CD8-positive, alpha-beta memory T cell (primary cell): ENCODE measurements at regions of chr15 and their contacts with region 1.

Region 1: DNA sequence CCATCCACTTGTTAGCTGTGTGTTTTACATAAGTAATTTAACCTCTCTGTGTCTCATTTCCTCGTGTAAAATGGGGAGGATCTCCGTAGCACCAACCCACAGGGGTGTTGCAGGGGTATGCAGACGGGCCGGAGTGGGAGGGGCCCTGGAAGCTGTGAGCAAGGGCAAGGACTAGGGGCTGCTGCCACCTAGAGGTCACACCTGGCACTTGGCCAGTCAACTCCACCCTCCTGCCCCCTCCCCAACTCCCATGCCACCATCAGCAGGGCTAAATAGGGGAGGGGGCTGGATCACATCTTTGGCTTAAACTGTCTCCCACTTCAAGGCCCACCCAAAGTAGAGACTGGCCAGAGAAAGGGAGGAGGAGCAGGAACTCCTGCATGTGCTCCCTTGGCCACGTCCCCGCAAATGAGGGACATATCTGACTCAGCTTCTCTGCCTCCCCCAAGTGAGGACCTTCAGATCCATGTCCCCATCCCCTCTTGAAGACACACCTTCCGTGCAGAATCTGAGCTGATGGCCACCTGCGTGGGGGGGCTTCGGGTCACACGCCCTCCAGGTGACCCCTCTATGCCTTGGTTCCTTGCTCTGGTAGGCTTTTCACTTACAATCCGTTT is 2.6 kb downstream of the CCDC9B start:
- DNase-seq: peak; percentile 59 to 83 (median 62)
- H3K4me3 ChIP-seq: no peak overlapping the region
- H3K4me3 Mint-ChIP-seq: no peak overlapping the region
- H3K27ac ChIP-seq: no peak overlapping the region
- H3K27ac Mint-ChIP-seq: peak overlapping the region in 2 of 8 donors; percentile 38 to 54
- H3K4me1 ChIP-seq: peaks cover 23% of the 10 kb centered on the region
- H3K4me1 Mint-ChIP-seq: peaks cover 4 to 12% (median 7%) of the 10 kb centered on the region in 3 donors
- H3K27me3 ChIP-seq: no peaks in the 10 kb centered on the region
- H3K27me3 Mint-ChIP-seq: peaks cover 2 to 4% of the 10 kb centered on the region in 2 donors

Region 2: DNA sequence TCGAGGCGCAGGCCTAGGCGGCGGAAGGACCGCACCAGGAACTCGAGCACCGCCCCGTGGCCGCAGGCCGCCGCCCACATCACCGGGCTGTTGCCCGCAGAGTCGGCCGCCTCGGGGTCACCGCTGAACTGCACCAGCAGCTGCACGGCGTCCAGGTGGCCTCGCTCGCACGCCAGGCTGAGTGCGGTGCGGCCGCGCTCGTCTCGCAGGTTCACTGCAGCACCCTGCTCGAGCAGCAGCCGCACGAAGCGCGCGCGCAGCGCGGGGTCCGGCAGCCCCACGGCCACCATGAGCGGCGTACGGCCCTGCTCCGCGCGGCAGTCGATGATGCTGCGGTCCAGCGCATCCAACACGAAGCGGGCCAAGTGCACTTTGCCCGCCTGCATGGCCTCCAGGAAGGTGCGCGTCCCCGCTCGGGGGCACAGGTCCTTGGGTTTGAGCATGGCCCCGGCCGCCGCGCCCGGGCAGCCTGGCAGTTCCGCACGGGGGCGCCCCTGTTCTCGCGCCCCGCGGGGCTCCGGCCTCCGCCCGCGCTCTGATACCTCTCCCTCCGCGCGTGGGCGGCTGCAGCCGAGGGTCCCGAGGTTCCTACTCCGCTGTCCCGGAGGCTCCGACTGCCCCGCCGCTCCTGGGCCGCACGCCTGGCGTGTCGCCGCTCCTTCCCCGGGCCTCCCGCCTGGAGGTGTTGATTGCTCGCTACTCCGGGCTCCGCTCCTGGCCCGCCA is 55.8 kb before region 1 on chr15:
- CTCF ChIA-PET with region 1: interaction called, 268 read pairs
- POLR2A ChIA-PET with region 1: no interaction called
- DNase-seq: peak; percentile 30 to 69 (median 44)
- H3K4me3 ChIP-seq: peak overlapping the region; percentile 64
- H3K4me3 Mint-ChIP-seq: peak overlapping the region; percentile 55 to 85 (median 64)
- H3K27ac ChIP-seq: no peak overlapping the region
- H3K27ac Mint-ChIP-seq: no peak overlapping the region
- H3K4me1 ChIP-seq: peaks cover 6% of the 10 kb centered on the region
- H3K4me1 Mint-ChIP-seq: peaks cover 3 to 9% (median 4%) of the 10 kb centered on the region in 3 donors
- H3K27me3 ChIP-seq: peaks cover 26% of the 10 kb centered on the region
- H3K27me3 Mint-ChIP-seq: peaks cover 7 to 33% of the 10 kb centered on the region in 2 donors

Region 3: DNA sequence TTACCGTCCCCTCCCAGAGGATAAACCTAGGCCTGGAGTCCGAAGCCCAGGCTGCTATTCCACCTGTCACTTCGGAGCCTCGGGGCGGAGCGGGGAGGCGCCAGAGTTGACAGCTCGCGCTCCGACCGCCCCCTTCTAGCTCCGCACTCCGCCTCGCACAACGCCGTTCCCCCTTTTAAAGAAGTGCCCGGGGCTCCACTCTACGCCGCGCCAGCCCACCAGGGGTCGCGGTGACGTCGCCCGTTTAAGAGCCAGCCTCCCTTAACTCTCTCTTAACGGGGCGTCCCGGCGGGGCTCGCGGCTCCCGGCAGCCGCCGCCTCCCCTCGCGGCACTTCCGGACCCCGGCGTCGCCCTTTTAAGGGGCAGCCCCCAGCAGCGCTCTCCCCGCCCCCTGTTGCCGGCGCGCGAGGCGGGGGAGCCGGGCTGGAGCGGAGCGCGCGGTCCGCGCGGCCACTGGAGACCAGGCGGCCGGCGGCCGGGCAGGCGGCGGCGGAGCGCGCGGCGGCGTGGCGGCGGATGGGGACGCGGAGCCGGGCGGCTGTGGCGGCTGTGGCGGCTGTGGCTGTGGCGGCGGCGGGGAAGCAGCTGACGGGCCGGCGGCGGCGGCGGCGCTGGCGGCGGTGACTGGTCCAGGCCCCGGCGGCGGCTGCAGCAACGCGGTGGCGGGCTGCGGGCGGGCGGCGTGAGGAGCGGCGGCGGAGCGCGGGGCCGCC is 14.8 kb before region 1 on chr15 and contains the start of gene INAFM2:
- CTCF ChIA-PET with region 1: interaction called, 90 read pairs
- POLR2A ChIA-PET with region 1: interaction called, 8 read pairs
- DNase-seq: peak; percentile 86 to 94 (median 90)
- H3K4me3 ChIP-seq: peak within 1 kb of the TSS; percentile 40
- H3K4me3 Mint-ChIP-seq: peak within 1 kb of the TSS; percentile 64 to 89 (median 83)
- H3K27ac ChIP-seq: peak within 1 kb of the TSS; percentile 39
- H3K27ac Mint-ChIP-seq: peak within 1 kb of the TSS; percentile 14 to 96 (median 68)
- H3K4me1 ChIP-seq: peaks cover 23% of the 10 kb centered on the region
- H3K4me1 Mint-ChIP-seq: peaks cover 22 to 42% (median 29%) of the 10 kb centered on the region in 3 donors
- H3K27me3 ChIP-seq: no peaks in the 10 kb centered on the region
- H3K27me3 Mint-ChIP-seq: peaks cover 0 to 3% of the 10 kb centered on the region in 2 donors
- total RNA-seq, gene INAFM2: 13.5 to 15.3 TPM

Region 4: GRCh38 chr15:40357723-40358470 is 19.7 kb after region 1 on chr15 and contains the start of gene DISP2:
- CTCF ChIA-PET with region 1: interaction called, 24 read pairs
- POLR2A ChIA-PET with region 1: no interaction called
- DNase-seq: peak; percentile 87 to 92 (median 88)
- H3K4me3 ChIP-seq: peak within 1 kb of the TSS; percentile 81
- H3K4me3 Mint-ChIP-seq: peak within 1 kb of the TSS; percentile 80 to 91 (median 83)
- H3K27ac ChIP-seq: no peak within 1 kb of the TSS
- H3K27ac Mint-ChIP-seq: peak within 1 kb of the TSS in 4 of 8 donors; percentile 24 to 56 (median 44)
- H3K4me1 ChIP-seq: peaks cover 11% of the 10 kb centered on the region
- H3K4me1 Mint-ChIP-seq: peaks cover 13 to 20% (median 18%) of the 10 kb centered on the region in 3 donors
- H3K27me3 ChIP-seq: no peaks in the 10 kb centered on the region
- H3K27me3 Mint-ChIP-seq: peaks cover 5 to 6% of the 10 kb centered on the region in 2 donors
- total RNA-seq, gene DISP2: 0.18 to 1.1 TPM

Region 5: GRCh38 chr15:40405501-40406381 is 67.6 kb after region 1 on chr15 and contains the start of gene IVD:
- CTCF ChIA-PET with region 1: interaction called, 32 read pairs
- POLR2A ChIA-PET with region 1: no interaction called
- DNase-seq: peak; percentile 87 to 93 (median 88)
- H3K4me3 ChIP-seq: peak within 1 kb of the TSS; percentile 85
- H3K4me3 Mint-ChIP-seq: peak within 1 kb of the TSS; percentile 86 to 96 (median 91)
- H3K27ac ChIP-seq: peak within 1 kb of the TSS; percentile 57
- H3K27ac Mint-ChIP-seq: peak within 1 kb of the TSS; percentile 68 to 93 (median 88)
- H3K4me1 ChIP-seq: peaks cover 24% of the 10 kb centered on the region
- H3K4me1 Mint-ChIP-seq: peaks cover 31 to 54% (median 45%) of the 10 kb centered on the region in 3 donors
- H3K27me3 ChIP-seq: no peaks in the 10 kb centered on the region
- H3K27me3 Mint-ChIP-seq: no peaks in the 10 kb centered on the region
- total RNA-seq, gene IVD: 68.5 to 80.1 TPM

Region 6: DNA sequence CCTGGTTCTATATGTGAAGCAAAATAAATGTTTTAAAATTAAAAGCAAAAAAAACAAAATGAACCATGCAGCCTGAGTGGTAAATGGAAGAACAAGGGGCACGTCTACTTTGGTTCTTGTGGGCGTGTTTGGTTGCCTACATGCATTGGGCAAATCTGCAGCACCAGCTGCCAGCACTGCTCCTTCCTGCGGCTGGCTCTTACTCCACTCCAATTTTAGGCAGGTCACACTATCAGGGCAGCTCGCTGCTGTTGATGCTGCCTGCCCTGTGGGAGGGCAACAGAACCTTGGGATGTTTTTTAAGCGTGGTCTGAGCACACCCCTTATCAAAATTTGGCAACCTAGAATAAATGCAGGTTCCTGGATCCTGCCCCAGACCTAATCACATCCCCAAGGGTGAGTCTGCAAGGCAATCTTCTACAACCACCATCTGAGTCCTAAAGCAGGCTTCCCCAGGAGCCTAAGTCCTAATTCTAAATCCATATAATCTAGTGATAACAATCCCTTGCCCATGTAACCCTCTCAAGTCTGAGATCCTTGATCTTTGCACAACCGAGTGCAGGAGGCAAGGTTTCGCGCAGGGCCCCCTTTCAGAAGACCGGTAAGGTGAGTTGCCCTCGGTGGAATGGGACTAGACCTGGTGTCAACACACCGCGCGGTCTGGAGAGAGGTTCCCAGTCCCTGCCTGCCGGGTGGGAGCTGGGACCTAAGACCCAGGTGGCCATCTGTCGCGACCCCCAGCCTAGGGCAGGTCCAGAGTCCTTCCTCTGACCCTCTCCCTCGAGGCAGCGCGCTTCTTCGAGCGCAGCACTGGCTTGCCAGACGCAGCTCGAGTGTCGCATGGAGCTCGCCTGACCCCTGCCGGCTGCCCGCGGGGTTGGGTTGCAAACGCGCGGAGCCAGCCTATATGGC is 83.4 kb after region 1 on chr15:
- CTCF ChIA-PET with region 1: interaction called, 202 read pairs
- POLR2A ChIA-PET with region 1: no interaction called
- DNase-seq: peak; percentile 66 to 83 (median 70)
- H3K4me3 ChIP-seq: no peak overlapping the region
- H3K4me3 Mint-ChIP-seq: peak overlapping the region in 2 of 7 donors; percentile 5 to 16
- H3K27ac ChIP-seq: no peak overlapping the region
- H3K27ac Mint-ChIP-seq: peak overlapping the region in 3 of 8 donors; percentile 29 to 68 (median 58)
- H3K4me1 ChIP-seq: peaks cover 4% of the 10 kb centered on the region
- H3K4me1 Mint-ChIP-seq: peaks cover 6 to 10% (median 6%) of the 10 kb centered on the region in 3 donors
- H3K27me3 ChIP-seq: no peaks in the 10 kb centered on the region
- H3K27me3 Mint-ChIP-seq: no peaks in the 10 kb centered on the region

Region 7: GRCh38 chr15:40600956-40601355 is 262.8 kb after region 1 on chr15:
- CTCF ChIA-PET with region 1: no interaction called
- POLR2A ChIA-PET with region 1: no interaction called
- DNase-seq: no peak
- H3K4me3 ChIP-seq: no peak overlapping the region
- H3K4me3 Mint-ChIP-seq: no peak overlapping the region
- H3K27ac ChIP-seq: no peak overlapping the region
- H3K27ac Mint-ChIP-seq: no peak overlapping the region
- H3K4me1 ChIP-seq: no peaks in the 10 kb centered on the region
- H3K4me1 Mint-ChIP-seq: peaks cover 0 to 4% (median 0%) of the 10 kb centered on the region in 3 donors
- H3K27me3 ChIP-seq: no peaks in the 10 kb centered on the region
- H3K27me3 Mint-ChIP-seq: no peaks in the 10 kb centered on the region